ENCODE measurements at regions of chr10 and their contacts with region 1.

Region 1: GRCh38 chr10:7507887-7508726 is 97.3 kb upstream of the SFMBT2 start:
- DNase-seq: peak; percentile 88
- ATAC-seq: peak; percentile 80
- H3K4me3 Mint-ChIP-seq: peak overlapping the region; percentile 58
- H3K27ac Mint-ChIP-seq: peak overlapping the region; percentile 89
- H3K4me1 Mint-ChIP-seq: peaks cover 55% of the 10 kb centered on the region
- H3K27me3 Mint-ChIP-seq: no peaks in the 10 kb centered on the region

Region 2: GRCh38 chr10:7484456-7485243 is 23.5 kb before region 1 on chr10:
- POLR2A ChIA-PET with region 1: interaction called, 20 read pairs
- DNase-seq: peak; percentile 47
- ATAC-seq: peak; percentile 95
- H3K4me3 Mint-ChIP-seq: peak overlapping the region; percentile 76
- H3K27ac Mint-ChIP-seq: peak overlapping the region; percentile 100
- H3K4me1 Mint-ChIP-seq: peaks cover 82% of the 10 kb centered on the region
- H3K27me3 Mint-ChIP-seq: no peaks in the 10 kb centered on the region

Region 3: GRCh38 chr10:7491949-7492659 is 16.0 kb before region 1 on chr10:
- POLR2A ChIA-PET with region 1: interaction called, 15 read pairs
- DNase-seq: no peak
- ATAC-seq: peak; percentile 73
- H3K4me3 Mint-ChIP-seq: peak overlapping the region; percentile 53
- H3K27ac Mint-ChIP-seq: peak overlapping the region; percentile 81
- H3K4me1 Mint-ChIP-seq: peaks cover 57% of the 10 kb centered on the region
- H3K27me3 Mint-ChIP-seq: no peaks in the 10 kb centered on the region